Left ventricle myocardium inferior (tissue), 1 donor: ENCODE measurements at regions of chr10 and their contacts with region 1.

Region 1: GRCh38 chr10:43689955-43690771 is 41.5 kb upstream of the ZNF32 start:
- DNase-seq: peak; percentile 90
- H3K4me3 ChIP-seq: peak overlapping the region; percentile 74
- H3K27ac ChIP-seq: peak overlapping the region; percentile 95
- H3K4me1 ChIP-seq: peaks cover 47% of the 10 kb centered on the region
- H3K27me3 ChIP-seq: no peaks in the 10 kb centered on the region
- CTCF ChIP-seq: peak; percentile 87

Region 2: GRCh38 chr10:43105102-43105785 is 584.9 kb before region 1 on chr10:
- intact Hi-C with region 1: no loop called
- DNase-seq: peak; percentile 77
- H3K4me3 ChIP-seq: peak overlapping the region; percentile 74
- H3K27ac ChIP-seq: peak overlapping the region; percentile 9
- H3K4me1 ChIP-seq: peaks cover 17% of the 10 kb centered on the region
- H3K27me3 ChIP-seq: peaks cover 50% of the 10 kb centered on the region
- CTCF ChIP-seq: peak; percentile 100

Region 3: DNA sequence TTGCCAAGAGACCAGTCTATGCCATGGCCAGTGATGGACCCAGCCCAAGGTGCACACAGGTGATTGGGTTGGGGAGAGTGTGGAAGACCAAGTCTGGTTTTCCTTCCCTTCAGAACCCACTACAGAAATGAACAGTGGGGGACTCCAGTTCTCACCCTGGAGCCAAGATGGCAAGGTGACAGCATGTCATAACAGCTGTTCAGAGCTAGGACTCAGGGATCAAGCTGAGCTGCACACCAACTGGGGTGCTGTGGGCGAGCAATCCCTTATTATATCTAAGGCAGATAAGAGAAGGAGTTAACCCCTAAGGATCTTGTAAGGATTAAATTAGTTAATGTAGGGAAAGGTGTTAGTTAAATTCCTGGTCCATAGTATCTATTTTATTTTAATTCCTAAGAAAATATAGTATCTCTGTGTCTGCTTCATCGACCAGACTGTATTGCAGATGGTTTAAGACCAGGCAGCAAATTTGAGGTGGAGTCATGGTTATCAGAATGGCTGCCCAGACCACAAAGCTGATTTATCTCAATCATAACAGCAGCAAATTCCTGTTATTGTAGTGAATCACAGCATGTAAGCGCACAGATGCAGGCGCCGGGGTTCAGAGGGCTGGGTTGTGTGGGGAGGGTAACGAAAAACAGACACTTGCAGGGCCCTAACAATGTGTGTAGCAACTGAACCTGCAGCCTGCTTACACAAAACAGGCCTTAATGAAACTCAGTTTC is 167.2 kb after region 1 on chr10:
- intact Hi-C with region 1: loop called (anchors 10 kb)
- DNase-seq: no peak
- H3K4me3 ChIP-seq: no peak overlapping the region
- H3K27ac ChIP-seq: peak overlapping the region; percentile 56
- H3K4me1 ChIP-seq: peaks cover 43% of the 10 kb centered on the region
- H3K27me3 ChIP-seq: no peaks in the 10 kb centered on the region
- CTCF ChIP-seq: no peak

Region 4: GRCh38 chr10:43878386-43878785 is 188.2 kb after region 1 on chr10:
- intact Hi-C with region 1: no loop called
- DNase-seq: peak; percentile 66
- H3K4me3 ChIP-seq: no peak overlapping the region
- H3K27ac ChIP-seq: peak overlapping the region; percentile 88
- H3K4me1 ChIP-seq: peaks cover 39% of the 10 kb centered on the region
- H3K27me3 ChIP-seq: no peaks in the 10 kb centered on the region
- CTCF ChIP-seq: no peak

Region 5: DNA sequence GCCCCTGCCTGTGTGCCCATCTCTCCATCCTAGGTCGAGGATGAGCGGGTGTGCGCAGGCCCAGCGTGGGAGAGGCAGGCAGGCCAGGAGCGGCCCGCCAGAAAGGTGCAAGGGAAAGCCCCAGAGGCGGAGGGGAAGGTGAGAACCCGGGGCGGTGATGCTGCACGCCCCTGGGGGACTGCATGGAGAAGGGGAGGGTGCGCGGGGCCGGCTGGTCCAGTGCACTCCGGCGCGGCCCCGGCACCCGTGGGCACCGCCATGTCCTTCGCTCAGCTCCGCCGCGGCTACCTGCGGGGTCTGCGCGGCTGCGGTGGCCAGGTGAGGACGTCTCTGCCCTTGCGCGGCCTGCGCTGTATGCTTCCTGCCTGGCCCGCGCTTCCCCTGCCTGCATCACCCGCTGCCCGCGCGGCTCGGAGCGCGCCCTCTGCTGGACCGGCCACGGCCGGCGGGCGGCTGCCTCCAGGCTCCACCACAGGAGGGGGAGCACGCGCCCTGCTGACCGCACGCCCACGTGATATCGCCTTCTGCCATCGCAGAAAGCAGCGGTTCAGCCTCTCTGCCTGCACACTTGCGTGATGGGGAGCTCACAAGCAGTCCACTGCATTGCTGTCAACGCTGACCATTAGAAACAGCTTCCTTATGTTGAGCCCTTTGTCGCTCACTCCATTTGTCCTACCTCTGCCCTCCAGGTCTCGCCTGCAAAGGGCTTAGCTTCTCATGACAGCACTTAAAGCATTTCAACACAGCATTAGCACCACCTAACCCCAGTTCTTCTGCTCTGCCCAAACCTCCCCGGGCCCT is 620.8 kb after region 1 on chr10:
- intact Hi-C with region 1: loop called (anchors 10 kb)
- DNase-seq: peak; percentile 89
- H3K4me3 ChIP-seq: peak overlapping the region; percentile 67
- H3K27ac ChIP-seq: peak overlapping the region; percentile 68
- H3K4me1 ChIP-seq: peaks cover 13% of the 10 kb centered on the region
- H3K27me3 ChIP-seq: no peaks in the 10 kb centered on the region
- CTCF ChIP-seq: peak; percentile 98